ENCODE measurements at regions of chr5 and their contacts with region 1.

Region 1: GRCh38 chr5:128349044-128349858 is 188.8 kb downstream of the FBN2 start:
- DNase-seq: peak in 2 of 5 donors; percentile 15 to 56
- ATAC-seq: peak in 2 of 4 donors; percentile 24 to 60
- H3K4me3 ChIP-seq: no peak overlapping the region
- H3K27ac ChIP-seq: no peak overlapping the region
- H3K4me1 ChIP-seq: peaks cover 0 to 13% (median 0%) of the 10 kb centered on the region in 12 donors
- H3K27me3 ChIP-seq: no peaks in the 10 kb centered on the region
- CTCF ChIP-seq: no peak
- POLR2A ChIP-seq: no peak

Region 2: GRCh38 chr5:128409166-128409800 is 60.0 kb after region 1 on chr5:
- intact Hi-C with region 1: loop called in 1 of 10 experiments (anchors 10 kb)
- DNase-seq: no peak
- ATAC-seq: peak in 1 of 4 donors; percentile 22
- H3K4me3 ChIP-seq: no peak overlapping the region
- H3K27ac ChIP-seq: peak overlapping the region in 4 of 12 donors; percentile 5 to 47 (median 21)
- H3K4me1 ChIP-seq: peaks cover 0 to 15% (median 3%) of the 10 kb centered on the region in 12 donors
- H3K27me3 ChIP-seq: no peaks in the 10 kb centered on the region
- CTCF ChIP-seq: no peak
- POLR2A ChIP-seq: no peak

Region 3: DNA sequence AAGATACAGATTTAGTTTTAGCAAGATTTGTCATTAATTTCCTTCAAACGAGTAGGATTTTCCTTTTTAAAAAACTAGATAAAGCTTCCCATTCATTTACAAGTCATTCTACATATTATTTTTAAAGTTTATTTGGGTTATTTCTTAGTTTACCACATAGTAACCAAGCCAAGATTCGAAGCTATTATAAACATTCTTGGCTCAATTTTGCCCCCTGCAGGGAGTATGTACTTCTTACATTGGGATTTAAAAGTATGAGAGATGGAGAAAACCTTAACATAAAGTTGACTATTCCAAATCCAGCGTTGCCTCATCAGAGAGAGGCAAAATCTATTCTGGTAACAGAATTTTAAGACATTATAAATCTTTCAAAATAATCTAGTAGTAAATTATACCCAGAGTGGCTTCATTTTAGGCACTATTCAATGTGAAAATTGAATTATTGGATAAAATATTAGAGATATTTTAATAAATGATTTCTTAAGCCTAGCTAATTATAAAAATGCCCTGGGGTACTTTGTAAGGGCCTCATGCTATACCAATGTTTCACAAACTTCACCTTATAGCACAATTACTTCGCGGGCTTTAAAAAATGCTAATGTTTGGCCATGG is 149.7 kb after region 1 on chr5:
- intact Hi-C with region 1: loop called in 1 of 10 experiments (anchors 5 kb)
- DNase-seq: peak in 1 of 5 donors; percentile 17
- ATAC-seq: peak in 2 of 4 donors; percentile 50 to 61
- H3K4me3 ChIP-seq: no peak overlapping the region
- H3K27ac ChIP-seq: no peak overlapping the region
- H3K4me1 ChIP-seq: peaks cover 0 to 4% (median 0%) of the 10 kb centered on the region in 12 donors
- H3K27me3 ChIP-seq: no peaks in the 10 kb centered on the region
- CTCF ChIP-seq: peak; percentile 27 to 72 (median 58)
- POLR2A ChIP-seq: no peak